Endothelial cell of umbilical vein (primary cell): ENCODE measurements at regions of chr1 and their contacts with region 1.

Region 1: GRCh38 chr1:2391041-2391930 is at the starts of genes MORN1 and RER1:
- DNase-seq: peak; percentile 100
- H3K4me3 ChIP-seq: peak within 1 kb of the TSS; percentile 80 to 92 (median 88)
- H3K27ac ChIP-seq: peak within 1 kb of the TSS; percentile 77
- H3K4me1 ChIP-seq: peaks cover 16% of the 10 kb centered on the region
- H3K27me3 ChIP-seq: no peaks in the 10 kb centered on the region
- CTCF ChIP-seq: no peak
- POLR2A ChIP-seq: peak; percentile 55
- total RNA-seq, gene MORN1: 6.4 and 6.5 TPM in 2 replicates
- total RNA-seq, gene RER1: 174 and 179 TPM in 2 replicates

Region 2: DNA sequence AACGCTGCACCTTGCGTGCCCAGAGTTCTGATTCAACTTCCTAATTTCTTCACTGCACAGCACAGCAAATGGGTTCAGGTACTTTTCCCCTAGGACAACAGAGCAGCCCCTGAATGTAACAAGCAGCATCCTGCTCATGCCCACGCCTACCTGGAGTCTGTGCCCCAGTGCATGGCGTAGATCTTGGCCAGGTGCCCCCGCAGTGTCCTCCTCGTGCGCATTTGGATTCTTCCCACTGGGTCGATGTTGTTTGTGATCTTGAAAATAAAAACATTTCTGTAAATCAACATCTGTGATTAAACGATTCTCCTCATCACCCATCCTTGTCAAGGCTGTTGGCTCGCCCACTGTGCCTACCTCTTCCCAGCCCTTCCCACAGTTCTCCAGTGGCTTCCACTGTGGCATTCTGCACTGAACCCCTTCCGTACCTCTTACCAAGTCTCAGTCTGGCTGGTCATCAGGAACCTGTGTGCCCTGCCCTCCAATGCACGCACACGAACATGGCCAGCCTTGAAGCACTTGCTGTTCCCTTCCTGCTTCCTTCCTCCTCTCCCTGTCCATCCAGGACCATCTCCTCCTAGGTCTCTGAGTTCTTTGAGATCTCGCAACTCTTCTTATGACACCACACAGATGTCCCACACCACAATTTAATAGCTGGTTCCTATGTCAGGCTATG is 575.5 kb before region 1 on chr1:
- CTCF ChIA-PET with region 1: no interaction called
- POLR2A ChIA-PET with region 1: no interaction called
- dilution Hi-C with region 1: no loop called
- intact Hi-C with region 1: no loop called
- DNase-seq: no peak
- H3K4me3 ChIP-seq: no peak overlapping the region
- H3K27ac ChIP-seq: no peak overlapping the region
- H3K4me1 ChIP-seq: no peaks in the 10 kb centered on the region
- H3K27me3 ChIP-seq: no peaks in the 10 kb centered on the region
- CTCF ChIP-seq: no peak
- POLR2A ChIP-seq: no peak

Region 3: GRCh38 chr1:2115681-2116341 is 275.5 kb before region 1 on chr1:
- CTCF ChIA-PET with region 1: no interaction called
- POLR2A ChIA-PET with region 1: no interaction called
- dilution Hi-C with region 1: no loop called
- intact Hi-C with region 1: no loop called
- DNase-seq: no peak
- H3K4me3 ChIP-seq: no peak overlapping the region
- H3K27ac ChIP-seq: no peak overlapping the region
- H3K4me1 ChIP-seq: no peaks in the 10 kb centered on the region
- H3K27me3 ChIP-seq: no peaks in the 10 kb centered on the region
- CTCF ChIP-seq: no peak
- POLR2A ChIP-seq: no peak

Region 4: GRCh38 chr1:2322065-2322571 is 69.2 kb before region 1 on chr1:
- CTCF ChIA-PET with region 1: no interaction called
- POLR2A ChIA-PET with region 1: no interaction called
- dilution Hi-C with region 1: no loop called
- intact Hi-C with region 1: loop called (anchors 2 kb)
- DNase-seq: peak; percentile 88
- H3K4me3 ChIP-seq: peak overlapping the region in 1 of 3 experiments; percentile 4
- H3K27ac ChIP-seq: no peak overlapping the region
- H3K4me1 ChIP-seq: peaks cover 5% of the 10 kb centered on the region
- H3K27me3 ChIP-seq: no peaks in the 10 kb centered on the region
- CTCF ChIP-seq: peak in 1 of 2 donors; percentile 22
- POLR2A ChIP-seq: no peak